Common myeloid progenitor, CD34-positive (primary cell): ENCODE measurements at regions of chrX and their contacts with region 1.

Region 1: DNA sequence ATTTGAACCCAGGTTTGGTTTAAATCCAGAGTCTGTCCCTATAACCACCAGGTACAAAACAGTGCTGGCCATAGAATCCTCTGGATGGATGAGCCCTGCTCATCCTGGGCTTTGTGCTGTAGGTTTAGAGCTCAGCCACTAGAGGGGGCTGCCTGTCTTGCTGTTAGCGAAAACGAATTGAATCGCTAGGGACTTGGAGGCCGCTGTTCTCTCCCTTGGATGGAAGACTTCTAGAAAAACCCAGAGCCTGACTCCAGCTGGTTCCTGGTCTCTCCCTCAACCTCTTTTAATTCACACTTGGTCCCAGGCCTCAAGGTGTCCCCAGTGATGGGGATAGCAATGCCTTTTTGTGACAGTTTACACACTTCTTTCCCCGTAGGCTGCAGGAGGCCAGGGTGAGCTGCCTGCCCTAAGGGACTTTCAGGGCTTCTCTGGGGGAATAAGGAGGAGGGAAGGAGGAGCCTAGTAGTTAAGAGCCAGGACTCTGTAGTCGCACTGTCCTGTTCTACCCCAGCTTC is 8.7 kb downstream of the RIPPLY1 start:
- DNase-seq: peak; percentile 43 to 74 (median 70)
- H3K4me3 ChIP-seq: no peak overlapping the region
- H3K27ac ChIP-seq: no peak overlapping the region
- H3K4me1 ChIP-seq: no peaks in the 10 kb centered on the region
- H3K27me3 ChIP-seq: peaks cover 0 to 30% (median 1%) of the 10 kb centered on the region in 5 experiments

Region 2: DNA sequence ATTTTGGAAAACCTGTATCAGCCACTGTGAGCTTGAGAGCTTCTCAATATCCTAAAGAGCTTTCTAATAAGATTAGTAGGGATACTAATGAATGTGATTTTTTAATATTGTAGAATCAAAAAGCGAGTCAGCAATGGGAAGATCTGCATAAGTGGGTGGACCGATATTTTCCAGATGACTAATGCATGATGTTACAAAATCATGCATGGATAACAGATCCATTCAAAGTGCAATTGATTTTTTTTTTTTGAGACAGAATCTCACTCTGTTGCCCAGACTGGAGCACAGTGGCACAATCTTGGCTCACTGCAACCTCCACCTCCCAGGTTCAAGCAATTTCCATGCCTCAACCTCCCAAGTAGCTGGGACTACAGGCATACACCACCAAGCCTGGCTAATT is 18.4 kb after region 1 on chrX:
- CTCF ChIA-PET with region 1: interaction called, 11 read pairs
- POLR2A ChIA-PET with region 1: no interaction called
- DNase-seq: no peak
- H3K4me3 ChIP-seq: no peak overlapping the region
- H3K27ac ChIP-seq: no peak overlapping the region
- H3K4me1 ChIP-seq: peaks cover 0 to 11% (median 5%) of the 10 kb centered on the region in 4 experiments
- H3K27me3 ChIP-seq: peaks cover 0 to 68% (median 18%) of the 10 kb centered on the region in 5 experiments

Region 3: DNA sequence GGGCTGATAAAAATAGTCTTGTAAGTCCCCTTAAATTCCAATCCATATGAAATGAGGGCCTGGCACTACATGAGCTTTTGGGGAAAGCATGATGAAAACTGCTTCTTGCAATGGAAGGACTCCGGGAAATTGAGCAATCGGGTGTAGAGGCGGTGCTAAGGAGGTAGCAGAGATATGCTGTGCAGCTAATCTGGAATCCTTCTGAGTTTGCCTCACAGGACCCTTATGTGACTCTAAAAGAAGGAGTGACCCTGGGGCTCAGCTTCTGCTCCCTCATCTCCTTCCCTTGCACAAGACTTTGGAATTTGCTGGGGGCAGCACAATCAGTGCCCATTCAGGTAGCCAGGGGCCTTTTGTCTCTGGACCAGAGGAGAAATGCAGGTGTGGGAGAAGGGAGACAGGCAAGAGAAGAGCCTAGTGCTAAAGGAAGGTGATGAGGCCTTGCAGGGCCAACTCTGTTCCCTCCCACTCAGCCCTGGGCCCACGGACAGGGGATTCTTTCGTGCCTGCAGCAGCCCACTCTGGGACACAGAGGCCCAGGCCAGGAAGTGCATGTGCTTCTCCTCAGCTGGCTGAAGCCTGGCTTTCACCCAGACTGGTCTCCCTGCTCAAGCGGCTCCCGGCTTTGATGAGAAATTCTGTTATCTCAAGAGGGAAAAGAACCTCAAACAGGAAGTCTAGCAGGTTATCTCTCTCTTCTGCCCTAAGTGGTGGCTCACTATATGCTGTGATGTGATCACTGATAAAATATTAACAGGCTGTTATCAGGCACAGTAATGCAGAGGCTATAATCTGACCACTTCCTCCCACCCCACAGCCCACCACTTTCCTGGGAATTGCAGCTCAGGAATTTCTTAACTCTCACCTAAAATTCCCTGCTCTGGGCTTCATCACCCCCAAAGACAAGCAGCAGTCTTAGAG is 38.9 kb after region 1 on chrX:
- CTCF ChIA-PET with region 1: interaction called, 10 read pairs
- POLR2A ChIA-PET with region 1: no interaction called
- DNase-seq: peak in 1 of 3 donors; percentile 10
- H3K4me3 ChIP-seq: no peak overlapping the region
- H3K27ac ChIP-seq: no peak overlapping the region
- H3K4me1 ChIP-seq: peaks cover 3 to 11% (median 4%) of the 10 kb centered on the region in 4 experiments
- H3K27me3 ChIP-seq: peaks cover 0 to 61% (median 13%) of the 10 kb centered on the region in 5 experiments

Region 4: GRCh38 chrX:106952988-106953387 is 58.5 kb after region 1 on chrX:
- CTCF ChIA-PET with region 1: interaction called, 16 read pairs
- POLR2A ChIA-PET with region 1: no interaction called
- DNase-seq: peak; percentile 10 to 46 (median 39)
- H3K4me3 ChIP-seq: no peak overlapping the region
- H3K27ac ChIP-seq: no peak overlapping the region
- H3K4me1 ChIP-seq: no peaks in the 10 kb centered on the region
- H3K27me3 ChIP-seq: peaks cover 0 to 15% (median 0%) of the 10 kb centered on the region in 5 experiments

Region 5: GRCh38 chrX:106959901-106960300 is 65.5 kb after region 1 on chrX:
- CTCF ChIA-PET with region 1: interaction called, 16 read pairs
- POLR2A ChIA-PET with region 1: no interaction called
- DNase-seq: peak in 2 of 3 donors; percentile 6 to 8
- H3K4me3 ChIP-seq: no peak overlapping the region
- H3K27ac ChIP-seq: no peak overlapping the region
- H3K4me1 ChIP-seq: no peaks in the 10 kb centered on the region
- H3K27me3 ChIP-seq: peaks cover 0 to 12% (median 0%) of the 10 kb centered on the region in 5 experiments